ENCODE measurements at regions of chr4 and their contacts with region 1.

Region 1: DNA sequence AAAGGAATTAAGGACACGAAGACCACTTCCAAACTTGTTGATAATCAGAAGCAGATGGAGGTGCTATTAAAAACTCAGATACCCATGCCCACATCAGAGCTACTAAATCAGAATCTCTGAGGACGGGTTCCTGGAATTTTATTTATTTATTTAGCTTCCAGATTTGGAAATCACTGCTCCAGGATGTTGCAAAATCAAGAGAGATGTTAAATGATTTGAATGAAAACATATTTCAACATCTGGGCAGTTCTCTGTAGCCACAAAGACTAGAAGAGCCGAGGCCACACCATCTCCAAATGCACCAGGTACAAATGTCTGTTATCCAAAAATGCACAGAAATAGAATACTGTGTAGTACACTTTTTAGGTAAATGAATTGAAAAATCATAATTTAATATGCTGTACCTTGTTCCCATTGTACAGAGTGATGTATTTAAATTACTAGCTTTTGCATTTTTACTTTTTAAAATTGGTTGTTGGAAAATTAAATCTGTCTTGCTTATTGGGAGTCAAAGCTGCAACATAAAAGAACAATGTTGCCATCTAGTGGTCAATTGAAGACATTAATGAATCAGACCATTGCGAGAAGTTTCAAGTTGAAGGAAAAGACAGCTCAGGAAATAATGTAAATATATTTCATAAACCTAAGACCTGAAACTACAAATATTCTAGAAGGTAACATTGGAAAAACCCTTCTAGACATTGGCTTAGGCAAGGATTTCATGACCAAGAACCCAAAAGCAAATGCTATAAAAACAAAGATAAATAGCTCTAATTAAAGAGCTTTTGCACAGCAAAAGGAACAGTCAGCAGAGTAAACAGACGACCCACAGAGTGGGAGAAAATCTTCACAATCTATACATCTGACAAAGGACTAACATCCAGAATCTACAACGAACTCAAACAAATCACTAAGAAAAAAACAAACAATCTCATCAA is 151.3 kb upstream of the TTC29 start:
- DNase-seq: no peak
- ATAC-seq: peak in 1 of 2 donors; percentile 48

Region 2: GRCh38 chr4:146235654-146236177 is 861.2 kb before region 1 on chr4:
- intact Hi-C with region 1: loop called in 1 of 2 experiments (anchors 10 kb)
- DNase-seq: no peak
- ATAC-seq: peak; percentile 27 to 72

Region 3: GRCh38 chr4:146342600-146343192 is 754.2 kb before region 1 on chr4:
- intact Hi-C with region 1: loop called in 1 of 2 experiments (anchors 10 kb)
- DNase-seq: no peak
- ATAC-seq: no peak

Region 4: DNA sequence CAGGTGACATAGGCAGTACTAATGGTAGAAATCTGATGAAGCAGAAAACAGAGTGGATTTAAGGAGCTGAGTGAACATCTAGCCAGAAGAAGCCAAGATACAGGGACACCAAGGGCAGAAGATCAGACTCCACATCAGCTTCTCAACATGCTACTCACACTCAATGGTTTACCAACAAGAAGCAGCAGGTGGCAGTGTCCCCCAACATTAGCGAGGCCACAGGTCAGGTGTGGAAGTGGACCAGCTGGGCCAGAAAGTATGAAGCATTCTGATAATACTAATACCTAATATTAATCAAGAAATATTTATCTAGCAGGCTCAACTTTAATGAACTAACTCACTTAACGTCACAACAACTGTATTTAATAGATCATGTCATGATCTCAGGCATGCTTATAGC is 77.9 kb before region 1 on chr4:
- intact Hi-C with region 1: loop called (anchors 1 to 5 kb)
- DNase-seq: peak; percentile 60
- ATAC-seq: peak; percentile 84 to 85

Measured in left cardiac atrium (tissue), 4 donors.